ENCODE measurements at regions of chr9 and their contacts with region 1.

Region 1: GRCh38 chr9:79565245-79565644 is 6.5 kb upstream of the TLE4 start:
- DNase-seq: no peak
- H3K4me3 ChIP-seq: no peak overlapping the region
- H3K27ac ChIP-seq: no peak overlapping the region
- H3K4me1 ChIP-seq: peaks cover 2 to 7% of the 10 kb centered on the region in 2 donors
- H3K27me3 ChIP-seq: no peaks in the 10 kb centered on the region
- CTCF ChIP-seq: no peak
- POLR2A ChIP-seq: no peak

Region 2: GRCh38 chr9:79623799-79624721 is 58.8 kb after region 1 on chr9:
- intact Hi-C with region 1: no loop called
- DNase-seq: peak in 5 of 7 donors; percentile 23 to 29 (median 26)
- H3K4me3 ChIP-seq: no peak overlapping the region
- H3K27ac ChIP-seq: no peak overlapping the region
- H3K4me1 ChIP-seq: peaks cover 0 to 19% of the 10 kb centered on the region in 2 donors
- H3K27me3 ChIP-seq: no peaks in the 10 kb centered on the region
- CTCF ChIP-seq: no peak
- POLR2A ChIP-seq: no peak

Region 3: GRCh38 chr9:79709743-79710674 is 144.8 kb after region 1 on chr9:
- intact Hi-C with region 1: loop called in 1 of 2 experiments (anchors 10 kb)
- DNase-seq: no peak
- H3K4me3 ChIP-seq: no peak overlapping the region
- H3K27ac ChIP-seq: no peak overlapping the region
- H3K4me1 ChIP-seq: no peaks in the 10 kb centered on the region
- H3K27me3 ChIP-seq: no peaks in the 10 kb centered on the region
- CTCF ChIP-seq: no peak
- POLR2A ChIP-seq: no peak

Region 4: GRCh38 chr9:79812507-79813257 is 247.4 kb after region 1 on chr9:
- intact Hi-C with region 1: no loop called
- DNase-seq: no peak
- H3K4me3 ChIP-seq: peak overlapping the region in 1 of 4 donors; percentile 26
- H3K27ac ChIP-seq: no peak overlapping the region
- H3K4me1 ChIP-seq: peaks cover under 1 to 14% of the 10 kb centered on the region in 2 donors
- H3K27me3 ChIP-seq: no peaks in the 10 kb centered on the region
- CTCF ChIP-seq: no peak
- POLR2A ChIP-seq: no peak